ENCODE measurements at regions of chr6 and their contacts with region 1.

Region 1: GRCh38 chr6:83192871-83193746 is at the starts of genes PGM3 and RWDD2A:
- DNase-seq: peak; percentile 97
- H3K4me3 Mint-ChIP-seq: peak within 1 kb of the TSS; percentile 99
- H3K27ac Mint-ChIP-seq: peak within 1 kb of the TSS; percentile 97
- H3K4me1 Mint-ChIP-seq: peaks cover 26% of the 10 kb centered on the region
- H3K27me3 Mint-ChIP-seq: peaks cover 3% of the 10 kb centered on the region
- total RNA-seq, gene PGM3: 19.7 and 24.7 TPM in 2 replicates
- total RNA-seq, gene RWDD2A: 1.1 and 1.4 TPM in 2 replicates

Region 2: DNA sequence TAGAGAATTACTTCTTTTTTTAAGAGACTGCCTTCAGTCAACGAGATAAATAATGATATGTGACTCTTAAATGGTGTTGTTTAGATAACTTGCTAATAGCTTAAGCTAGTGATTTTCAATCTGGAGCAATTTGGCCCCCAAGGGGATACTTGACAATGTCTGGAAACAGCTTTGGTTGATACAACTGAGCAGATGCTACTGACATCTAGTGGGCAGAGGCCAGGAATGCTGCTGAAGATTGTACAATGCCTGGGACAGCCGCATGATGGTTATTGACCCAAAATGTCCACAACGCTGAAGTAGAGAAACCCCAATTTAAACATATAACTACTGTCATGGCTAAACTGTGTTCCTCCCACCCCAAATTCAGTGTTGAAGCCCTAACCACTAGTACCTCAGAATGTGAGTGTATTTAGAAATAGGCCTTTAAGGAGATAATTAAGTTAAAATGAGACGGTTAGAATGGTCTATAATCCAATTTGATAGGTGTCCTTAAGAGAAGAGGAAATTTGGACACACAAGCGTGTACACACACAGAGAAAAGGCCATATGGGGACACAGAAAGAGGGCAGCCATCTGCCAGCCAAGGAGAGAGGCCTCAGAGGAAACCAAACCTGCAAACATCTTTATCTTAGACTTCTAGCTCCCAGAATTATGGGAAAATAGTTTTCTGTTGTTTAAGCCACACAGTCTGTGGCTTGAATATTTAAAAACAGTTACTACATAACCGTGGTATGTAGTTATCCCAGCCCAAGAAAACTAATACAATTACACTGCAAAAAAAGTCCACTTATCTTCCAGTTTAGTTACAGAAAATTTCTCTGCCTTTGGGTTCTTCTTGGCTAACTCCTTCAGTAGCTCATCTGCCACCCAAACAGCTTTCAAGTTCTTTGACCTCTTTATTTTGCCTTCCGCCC is 22.3 kb after region 1 on chr6:
- intact Hi-C with region 1: loop called (anchors 2 kb)
- DNase-seq: peak; percentile 86
- H3K4me3 Mint-ChIP-seq: no peak overlapping the region
- H3K27ac Mint-ChIP-seq: no peak overlapping the region
- H3K4me1 Mint-ChIP-seq: peaks cover 3% of the 10 kb centered on the region
- H3K27me3 Mint-ChIP-seq: peaks cover 20% of the 10 kb centered on the region

Region 3: DNA sequence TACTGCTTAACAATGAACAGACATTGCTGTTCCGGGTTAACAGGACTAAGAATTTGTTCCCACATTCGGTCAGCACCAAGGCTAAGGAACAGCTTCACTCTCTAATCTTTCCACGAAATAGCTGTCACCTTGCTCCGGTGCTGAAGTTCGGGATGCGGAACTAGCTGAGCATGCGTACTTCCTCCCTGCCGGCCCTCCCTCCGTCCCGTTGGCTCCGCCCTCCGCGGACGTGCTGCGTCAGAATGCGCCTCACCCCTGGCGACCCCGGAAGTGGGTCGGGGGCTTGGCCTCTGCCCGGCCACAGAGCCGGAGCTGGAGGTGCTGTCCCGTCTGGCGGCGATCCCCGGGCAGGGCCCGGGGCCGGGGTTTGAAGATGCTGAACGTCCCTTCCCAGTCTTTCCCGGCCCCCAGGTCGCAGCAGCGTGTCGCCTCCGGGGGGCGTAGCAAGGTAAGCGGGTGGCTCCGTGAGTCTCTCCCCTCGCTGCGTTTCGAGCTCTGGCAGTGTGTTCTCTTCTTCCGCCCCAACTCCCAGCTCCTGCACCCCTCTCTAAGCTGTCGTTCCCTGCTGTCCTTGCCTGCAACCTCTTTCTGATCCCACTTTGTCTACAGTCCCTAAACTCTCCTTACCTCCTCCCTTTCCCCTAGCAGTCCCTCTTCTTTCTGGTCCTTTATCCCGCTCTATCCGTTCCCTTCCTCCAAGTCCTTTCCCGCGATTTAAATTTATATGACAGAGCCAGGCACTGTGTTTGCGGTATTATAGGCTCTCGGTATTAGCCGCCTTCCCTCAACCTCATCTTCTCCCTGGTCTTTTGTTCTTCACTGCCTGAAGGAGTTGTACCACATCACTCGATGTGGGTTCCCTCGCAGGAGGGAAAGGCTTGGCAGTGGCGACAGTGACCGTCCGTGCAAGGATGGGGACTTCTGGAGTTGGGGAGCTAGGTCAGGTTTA is 666.6 kb after region 1 on chr6 and contains the start of gene CYB5R4:
- intact Hi-C with region 1: no loop called
- DNase-seq: peak; percentile 99
- H3K4me3 Mint-ChIP-seq: peak within 1 kb of the TSS; percentile 98
- H3K27ac Mint-ChIP-seq: peak within 1 kb of the TSS; percentile 88
- H3K4me1 Mint-ChIP-seq: peaks cover 21% of the 10 kb centered on the region
- H3K27me3 Mint-ChIP-seq: peaks cover 13% of the 10 kb centered on the region
- total RNA-seq, gene CYB5R4: 24.7 and 27.0 TPM in 2 replicates